AG04449 (cell line): ENCODE measurements at regions of chr19 and their contacts with region 1.

Region 1: DNA sequence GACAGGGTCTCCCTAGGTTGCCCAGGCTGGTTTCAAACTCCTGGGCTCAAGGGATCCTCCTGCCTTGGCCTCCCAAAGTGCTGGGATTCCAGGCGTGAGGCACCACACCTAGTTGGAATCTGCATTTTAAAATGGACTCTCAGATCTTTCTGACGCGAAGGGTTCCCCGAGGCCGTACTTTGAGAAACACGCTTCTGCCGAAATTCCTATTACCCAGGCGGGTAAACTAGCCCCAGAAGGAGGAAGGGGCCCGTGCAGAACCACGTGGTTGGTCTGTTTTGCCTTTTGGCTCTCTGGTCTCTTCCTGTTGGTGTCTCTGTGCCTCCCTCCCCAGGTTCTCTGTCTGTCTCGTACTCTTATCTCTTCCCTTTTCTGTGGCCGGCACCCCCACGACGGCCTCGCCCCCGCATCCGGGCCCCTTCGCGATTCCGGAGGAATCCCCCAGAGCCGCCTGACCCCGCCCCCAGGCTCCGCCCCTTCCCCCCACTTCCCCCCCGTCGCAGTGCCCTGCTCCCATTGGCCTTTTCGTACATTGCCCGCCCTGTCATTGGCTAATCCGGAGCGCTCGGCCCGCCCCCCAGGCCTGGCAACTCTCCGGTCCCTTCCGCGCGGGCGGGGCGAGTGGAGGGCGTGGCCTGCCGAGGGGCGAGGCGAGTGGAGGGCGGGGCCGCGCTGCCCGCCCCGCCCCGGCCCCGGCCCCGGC is at the start of gene TNFAIP8L1:
- DNase-seq: peak; percentile 56
- H3K4me3 ChIP-seq: peak within 1 kb of the TSS; percentile 78
- CTCF ChIP-seq: no peak

Region 2: DNA sequence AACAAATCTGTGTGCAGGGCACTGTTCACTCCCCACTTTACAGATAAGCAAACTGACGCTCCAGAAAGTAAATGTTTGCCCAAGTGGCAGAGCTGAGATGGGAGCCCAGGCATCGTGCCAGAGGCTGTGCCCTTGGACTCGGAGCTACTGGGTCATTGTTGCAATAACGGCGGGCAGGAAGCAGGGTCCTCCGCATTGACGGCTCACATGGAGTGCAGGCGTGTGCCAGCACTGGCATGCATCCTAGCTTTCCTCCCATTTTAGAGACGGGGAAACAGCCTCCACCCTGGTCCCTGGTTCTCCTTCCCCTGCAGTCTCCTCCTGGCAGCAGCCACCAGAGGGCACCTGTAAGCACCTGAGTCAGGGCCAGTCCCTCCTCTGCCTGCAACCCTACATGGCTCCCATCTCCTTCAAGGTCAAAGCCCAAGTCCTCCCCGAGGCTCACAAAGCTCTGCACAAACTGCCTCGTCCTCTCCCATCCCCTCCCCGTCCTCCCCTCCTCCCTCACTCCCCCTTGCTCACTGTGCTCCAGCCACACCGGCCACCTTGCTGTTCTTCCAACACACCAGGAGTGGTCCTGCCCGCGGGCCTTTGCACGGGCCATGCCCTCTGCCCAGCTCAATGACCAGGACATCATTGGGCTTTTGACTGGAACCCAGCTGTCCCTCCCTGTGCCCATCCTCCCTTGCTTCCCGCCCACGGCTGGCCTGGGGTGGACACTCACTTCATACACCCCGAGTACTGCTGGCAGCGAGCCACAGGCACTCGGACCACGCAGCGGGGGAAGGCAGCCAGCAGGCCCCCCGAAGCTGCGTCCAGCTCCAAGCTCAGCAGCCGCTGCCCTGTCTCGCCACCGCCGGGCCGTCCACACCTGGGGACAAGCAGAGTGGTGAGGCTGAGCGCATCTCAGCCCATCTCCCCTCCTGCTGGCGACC is 91.4 kb before region 1 on chr19:
- CTCF ChIA-PET with region 1: interaction called, 15 read pairs
- POLR2A ChIA-PET with region 1: no interaction called
- DNase-seq: no peak
- H3K4me3 ChIP-seq: no peak overlapping the region
- CTCF ChIP-seq: peak; percentile 25

Region 3: GRCh38 chr19:4567584-4568071 is 71.4 kb before region 1 on chr19:
- CTCF ChIA-PET with region 1: interaction called, 143 read pairs
- POLR2A ChIA-PET with region 1: no interaction called
- DNase-seq: no peak
- H3K4me3 ChIP-seq: no peak overlapping the region
- CTCF ChIP-seq: peak; percentile 94

Region 4: GRCh38 chr19:4583961-4584669 is 54.9 kb before region 1 on chr19:
- CTCF ChIA-PET with region 1: interaction called, 16 read pairs
- POLR2A ChIA-PET with region 1: no interaction called
- DNase-seq: no peak
- H3K4me3 ChIP-seq: peak overlapping the region; percentile 59
- CTCF ChIP-seq: no peak

Region 5: DNA sequence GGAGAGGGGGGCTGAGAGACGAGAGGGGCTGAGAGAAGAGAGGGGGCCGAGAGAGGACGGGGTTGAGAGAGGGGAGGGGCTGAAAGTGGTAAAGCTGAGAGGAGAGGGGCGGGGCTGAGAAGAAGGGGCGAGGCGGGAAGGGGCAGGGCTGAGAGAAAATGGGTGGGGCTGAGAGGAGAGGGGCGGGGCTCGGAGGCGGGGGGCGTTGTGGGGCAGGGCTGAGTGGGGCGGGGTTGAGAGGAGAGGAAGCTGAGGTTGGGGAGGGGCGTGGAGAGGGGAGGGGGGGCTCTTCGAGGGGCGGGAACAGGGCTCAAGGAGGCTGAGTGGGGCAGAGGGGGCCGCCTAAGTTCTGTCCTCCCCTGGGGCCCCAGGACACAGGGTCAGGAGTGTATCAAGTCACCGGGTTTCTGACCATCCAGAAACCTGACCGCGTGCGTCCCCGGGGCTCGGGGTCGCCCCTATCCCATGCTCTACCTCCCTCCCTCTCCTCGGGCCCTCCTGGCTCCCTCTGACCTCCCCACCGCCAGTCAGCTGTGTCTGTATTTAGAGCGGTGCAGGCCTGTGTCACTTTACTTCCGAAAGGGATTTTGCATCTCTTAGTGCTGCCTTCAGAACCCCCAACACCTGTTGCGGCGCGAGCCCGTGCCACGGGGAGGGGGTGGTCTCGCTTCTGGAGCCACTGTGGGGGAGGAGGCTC is 40.9 kb before region 1 on chr19:
- CTCF ChIA-PET with region 1: interaction called, 19 read pairs
- POLR2A ChIA-PET with region 1: no interaction called
- DNase-seq: no peak
- H3K4me3 ChIP-seq: no peak overlapping the region; the same call in 1 of the 2 replicates
- CTCF ChIP-seq: no peak

Region 6: DNA sequence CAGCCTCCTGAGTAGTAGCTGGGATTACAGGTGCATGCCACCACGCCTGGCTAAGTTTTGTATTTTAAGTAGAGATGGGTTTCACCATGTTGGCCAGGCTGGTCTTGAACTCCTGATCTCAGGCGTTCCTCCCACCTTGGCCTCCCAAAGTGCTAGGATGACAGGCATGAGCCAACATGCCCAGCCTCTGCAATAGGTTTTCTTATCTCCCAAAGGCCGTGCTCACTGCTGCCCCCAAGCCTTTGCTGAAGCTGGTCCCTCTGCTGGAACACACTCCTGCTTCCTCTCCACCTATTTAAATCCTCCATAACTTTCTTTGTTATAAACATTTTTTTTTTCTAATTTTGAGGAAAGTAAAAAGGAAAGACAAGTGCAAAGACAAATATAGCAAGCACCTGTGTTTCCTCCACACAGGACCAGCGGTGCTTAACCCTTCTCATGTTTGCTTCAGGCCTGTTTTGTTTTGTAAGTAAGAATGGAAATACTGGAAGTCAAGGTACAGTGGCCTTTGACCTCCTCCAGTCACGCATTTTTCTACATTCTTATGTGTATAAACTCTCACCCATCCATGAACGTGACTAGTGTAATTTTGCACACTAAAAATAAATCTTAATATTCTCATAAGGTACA is 14.1 kb before region 1 on chr19:
- CTCF ChIA-PET with region 1: interaction called, 22 read pairs
- POLR2A ChIA-PET with region 1: no interaction called
- DNase-seq: no peak
- H3K4me3 ChIP-seq: no peak overlapping the region
- CTCF ChIP-seq: peak; percentile 21